Dendritic cell treated with granulocyte-macrophage colony-stimulating factor and Interleukin-4, amounts not matched to agents 40 ng/mL and 50 ng/mL, for 4 days (primary cell): ENCODE measurements at regions of chr2 and their contacts with region 1.

Region 1: DNA sequence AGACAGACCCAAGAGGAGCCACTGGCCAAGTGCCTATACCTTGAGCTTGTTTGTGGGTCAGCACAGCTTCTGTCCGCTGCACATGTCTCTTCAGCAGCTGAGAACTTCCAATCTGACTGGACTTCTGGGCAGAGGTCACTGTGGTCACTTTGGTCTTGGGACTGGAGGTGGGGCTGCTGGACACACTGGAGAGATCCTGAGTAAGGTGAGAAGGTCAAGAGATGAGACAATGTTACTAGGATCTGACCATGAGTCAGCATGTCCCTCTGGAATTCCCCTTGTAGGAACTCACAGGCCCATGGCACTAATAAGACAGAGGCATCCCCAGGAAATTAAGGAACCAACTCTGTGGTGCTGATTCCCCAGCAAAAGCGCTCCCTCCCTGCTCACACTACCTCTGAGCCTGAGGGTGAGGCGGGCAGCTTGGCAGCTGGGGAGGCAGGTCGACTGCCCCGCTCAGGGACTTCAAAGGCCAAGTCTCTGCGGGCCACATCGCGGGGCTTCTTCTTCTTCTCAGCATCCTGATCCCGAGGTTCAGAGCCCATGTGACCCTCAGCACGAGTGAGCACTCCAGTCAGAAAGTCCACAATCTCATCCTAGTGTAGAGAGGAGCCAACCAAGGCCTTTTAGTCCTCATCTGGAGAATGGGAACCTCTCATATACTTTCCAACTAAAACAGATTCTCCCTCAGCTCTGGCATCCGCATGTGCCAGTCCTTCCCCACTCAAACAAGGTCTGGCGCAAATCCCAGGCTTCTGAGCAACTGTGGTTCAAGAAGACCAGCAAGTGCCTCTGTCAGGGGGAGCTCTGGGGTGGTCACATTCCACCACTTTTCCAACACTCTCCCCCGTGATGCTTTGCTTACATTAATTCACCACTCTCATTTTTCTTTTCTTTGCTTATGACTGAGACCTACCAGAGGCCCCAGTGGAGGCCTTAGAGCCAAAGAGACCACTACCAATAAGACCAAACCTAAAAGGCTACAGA is 29.4 kb downstream of the KANSL3 start:
- H3K4me3 Mint-ChIP-seq: no peak overlapping the region
- H3K27ac Mint-ChIP-seq: peak overlapping the region; percentile 67
- H3K4me1 Mint-ChIP-seq: peaks cover 45% of the 10 kb centered on the region
- H3K27me3 Mint-ChIP-seq: no peaks in the 10 kb centered on the region

Region 2: DNA sequence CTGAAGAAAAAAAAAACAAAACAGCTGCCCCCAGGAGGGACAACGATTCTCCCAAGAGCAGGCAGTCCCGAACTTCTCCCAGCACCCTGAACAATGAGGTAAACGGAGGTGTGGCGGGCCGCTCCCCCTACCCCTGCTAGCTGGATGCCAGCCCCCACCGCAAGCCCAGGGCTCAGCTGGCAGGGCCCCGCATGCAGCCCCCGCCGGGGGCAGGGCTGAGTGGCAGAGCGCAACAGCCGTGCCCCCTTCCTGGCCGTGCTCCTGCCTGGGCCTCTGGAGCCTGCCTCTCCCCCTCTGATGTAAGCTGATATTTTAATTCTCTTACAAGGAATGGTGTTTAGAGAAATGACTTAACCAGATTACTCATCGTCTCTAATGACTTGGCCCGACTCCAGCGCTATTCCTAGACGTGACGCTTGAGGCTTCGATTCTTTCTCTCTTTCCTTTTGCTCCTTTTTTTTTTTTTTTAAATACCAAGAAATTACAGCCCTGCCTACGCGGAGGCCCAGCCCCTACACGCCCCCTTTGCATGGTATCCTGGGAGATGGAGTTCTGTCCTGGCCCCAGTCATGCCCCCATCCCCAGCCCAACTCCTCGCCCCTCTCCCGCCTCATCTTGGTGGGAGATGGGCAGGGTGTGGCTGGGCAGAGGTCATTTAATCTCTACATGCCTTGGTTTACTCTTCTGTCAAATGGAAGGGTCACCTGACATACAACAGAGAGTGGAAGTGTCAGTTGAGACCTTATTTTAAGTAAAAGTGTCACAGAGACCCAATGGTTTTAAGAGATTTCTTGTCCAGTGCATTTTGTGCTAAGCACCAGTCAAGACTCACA is 76.7 kb before region 1 on chr2:
- intact Hi-C with region 1: no loop called
- H3K4me3 Mint-ChIP-seq: peak overlapping the region; percentile 70
- H3K27ac Mint-ChIP-seq: peak overlapping the region; percentile 89
- H3K4me1 Mint-ChIP-seq: peaks cover 82% of the 10 kb centered on the region
- H3K27me3 Mint-ChIP-seq: peaks cover 13% of the 10 kb centered on the region

Region 3: GRCh38 chr2:96801005-96801785 is 192.4 kb after region 1 on chr2:
- intact Hi-C with region 1: loop called (anchors 10 kb)
- H3K4me3 Mint-ChIP-seq: no peak overlapping the region
- H3K27ac Mint-ChIP-seq: no peak overlapping the region
- H3K4me1 Mint-ChIP-seq: no peaks in the 10 kb centered on the region
- H3K27me3 Mint-ChIP-seq: no peaks in the 10 kb centered on the region